ENCODE measurements at regions of chr7 and their contacts with region 1.

Region 1: GRCh38 chr7:148867596-148868377 is 16.3 kb downstream of the EZH2 start:
- DNase-seq: no peak
- ATAC-seq: no peak
- H3K4me3 ChIP-seq: no peak overlapping the region
- H3K27ac ChIP-seq: no peak overlapping the region
- H3K4me1 ChIP-seq: no peaks in the 10 kb centered on the region
- H3K27me3 ChIP-seq: no peaks in the 10 kb centered on the region
- CTCF ChIP-seq: no peak

Region 2: GRCh38 chr7:149398195-149398820 is 530.5 kb after region 1 on chr7:
- intact Hi-C with region 1: loop called in 1 of 2 experiments (anchors 10 kb)
- DNase-seq: no peak
- ATAC-seq: no peak
- H3K4me3 ChIP-seq: no peak overlapping the region
- H3K27ac ChIP-seq: no peak overlapping the region
- H3K4me1 ChIP-seq: no peaks in the 10 kb centered on the region
- H3K27me3 ChIP-seq: peaks cover 0 to 15% (median 2%) of the 10 kb centered on the region in 3 donors
- CTCF ChIP-seq: no peak

Measured in psoas muscle (tissue), 8 donors.